Activated naive CD4-positive, alpha-beta T cell treated with anti-CD3 and anti-CD28 coated beads, Interleukin-2, amount 10 ng/mL, durations not matched to agents 7 days and 5 days (primary cell): ENCODE measurements at regions of chr1 and their contacts with region 1.

Region 1: DNA sequence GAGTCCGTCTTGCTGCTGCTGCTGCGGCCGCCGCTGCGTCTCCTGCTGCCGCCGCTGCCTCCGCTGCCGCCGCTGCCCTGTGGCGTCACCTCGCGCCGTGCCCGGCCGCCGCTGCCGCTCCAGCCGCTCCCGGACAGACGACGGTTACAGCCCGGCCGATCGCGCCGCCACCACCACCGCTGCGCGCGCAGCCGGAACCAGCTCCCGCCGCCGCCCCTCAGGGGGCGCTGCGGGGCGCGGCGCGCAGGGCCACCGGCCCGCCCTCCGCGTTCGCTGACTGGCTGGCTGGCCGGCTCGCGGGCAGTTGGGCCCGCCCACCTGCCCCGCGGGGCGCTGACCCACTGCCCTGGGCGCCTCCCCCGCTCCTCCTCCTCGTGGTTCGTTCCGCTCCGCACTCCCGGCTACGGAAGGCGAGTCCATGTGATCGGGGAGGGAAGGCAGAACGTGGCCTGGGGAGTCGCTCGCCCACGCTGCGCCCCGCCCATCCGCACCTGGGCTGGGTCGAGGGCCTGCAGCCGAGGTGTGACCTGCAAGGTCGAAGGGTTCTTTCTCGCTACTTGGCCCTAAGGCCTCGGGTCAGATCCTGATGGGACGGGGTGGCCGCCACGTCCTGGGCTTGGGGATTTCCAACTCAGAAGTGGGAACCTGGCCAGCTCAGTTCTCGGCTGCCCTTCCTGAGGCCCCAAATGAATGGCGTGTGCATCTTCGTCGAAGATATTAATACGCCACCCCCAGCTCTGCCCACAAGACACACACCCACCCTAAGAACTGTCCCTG is at the start of gene PTP4A2:
- DNase-seq: peak; percentile 91
- H3K4me3 Mint-ChIP-seq: peak within 1 kb of the TSS; percentile 92
- H3K27ac Mint-ChIP-seq: peak within 1 kb of the TSS; percentile 95
- H3K4me1 Mint-ChIP-seq: peaks cover 80% of the 10 kb centered on the region
- H3K27me3 Mint-ChIP-seq: no peaks in the 10 kb centered on the region

Region 2: DNA sequence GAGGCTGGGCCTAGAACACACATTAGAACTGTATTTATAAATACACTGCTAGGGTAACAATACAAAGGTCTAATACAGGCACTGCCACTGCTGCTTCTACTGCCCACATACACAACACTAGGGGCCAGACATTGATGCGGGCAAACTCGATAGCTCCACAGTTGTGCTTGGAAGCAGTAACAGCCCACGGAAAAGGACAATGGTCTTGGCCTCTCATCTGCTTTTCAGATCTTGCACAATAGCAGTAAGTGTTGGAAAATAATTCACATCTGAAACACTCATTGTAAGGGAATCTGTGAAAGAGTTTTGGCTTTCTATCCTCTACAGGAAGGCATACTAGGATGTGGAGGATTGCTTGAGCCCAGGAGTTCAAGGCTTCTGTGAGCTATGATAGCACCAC is 115.6 kb before region 1 on chr1:
- CTCF ChIA-PET with region 1: no interaction called
- DNase-seq: no peak
- H3K4me3 Mint-ChIP-seq: no peak overlapping the region
- H3K27ac Mint-ChIP-seq: no peak overlapping the region
- H3K4me1 Mint-ChIP-seq: peaks cover 20% of the 10 kb centered on the region
- H3K27me3 Mint-ChIP-seq: no peaks in the 10 kb centered on the region

Region 3: GRCh38 chr1:31897526-31898100 is 40.7 kb before region 1 on chr1:
- CTCF ChIA-PET with region 1: no interaction called
- DNase-seq: no peak
- H3K4me3 Mint-ChIP-seq: no peak overlapping the region
- H3K27ac Mint-ChIP-seq: no peak overlapping the region
- H3K4me1 Mint-ChIP-seq: peaks cover 19% of the 10 kb centered on the region
- H3K27me3 Mint-ChIP-seq: no peaks in the 10 kb centered on the region

Region 4: DNA sequence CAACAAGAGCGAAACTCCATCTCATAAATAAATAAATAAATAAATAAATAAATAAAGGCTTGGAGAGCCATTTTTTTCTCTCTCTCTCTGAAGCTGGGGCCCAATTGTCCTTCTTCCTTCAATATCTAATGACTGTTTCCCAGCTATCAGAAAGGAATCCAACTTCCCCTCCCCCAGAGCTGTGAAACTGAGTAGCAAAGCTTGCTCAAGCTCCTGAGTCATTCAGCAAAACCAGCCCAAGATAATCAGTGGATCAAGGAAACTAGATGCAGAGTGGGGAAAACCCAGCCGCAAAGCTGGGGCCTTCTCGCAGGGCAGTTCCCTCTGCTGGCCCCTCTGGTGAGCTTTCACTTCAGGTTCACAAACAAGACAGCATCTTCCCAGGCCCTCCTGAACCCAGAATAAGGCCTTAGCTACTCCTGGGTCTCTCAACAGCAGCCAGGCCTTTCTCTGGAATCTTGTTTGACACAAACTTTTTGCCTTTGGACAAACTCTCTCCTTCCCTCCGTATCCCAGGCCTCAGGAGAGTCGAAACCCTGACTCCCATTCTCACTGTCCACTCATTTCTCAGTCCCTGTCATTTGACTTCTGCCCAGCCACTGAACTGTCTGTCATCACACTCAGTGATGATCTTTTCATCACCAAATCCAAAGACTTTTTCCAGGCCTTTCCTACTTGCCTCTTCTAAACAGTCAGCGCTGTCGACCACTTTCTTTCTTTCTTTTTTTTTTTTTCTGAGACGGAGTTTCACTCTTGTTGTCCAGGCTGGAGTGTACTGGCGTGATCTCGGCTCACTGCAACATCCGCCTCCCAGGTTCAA is 17.8 kb after region 1 on chr1:
- CTCF ChIA-PET with region 1: interaction called, 410 read pairs
- DNase-seq: peak; percentile 85
- H3K4me3 Mint-ChIP-seq: no peak overlapping the region
- H3K27ac Mint-ChIP-seq: peak overlapping the region; percentile 83
- H3K4me1 Mint-ChIP-seq: peaks cover 66% of the 10 kb centered on the region
- H3K27me3 Mint-ChIP-seq: no peaks in the 10 kb centered on the region